Common myeloid progenitor, CD34-positive (primary cell): ENCODE measurements at regions of chr7 and their contacts with region 1.

Region 1: GRCh38 chr7:66894463-66895080 is 26.5 kb upstream of the TMEM248 start:
- DNase-seq: peak; percentile 44 to 69 (median 68)
- H3K4me3 ChIP-seq: no peak overlapping the region
- H3K27ac ChIP-seq: no peak overlapping the region
- H3K4me1 ChIP-seq: no peaks in the 10 kb centered on the region
- H3K27me3 ChIP-seq: no peaks in the 10 kb centered on the region

Region 2: GRCh38 chr7:66824041-66824625 is 70.4 kb before region 1 on chr7:
- CTCF ChIA-PET with region 1: interaction called, 10 read pairs
- POLR2A ChIA-PET with region 1: no interaction called
- DNase-seq: no peak
- H3K4me3 ChIP-seq: no peak overlapping the region
- H3K27ac ChIP-seq: no peak overlapping the region
- H3K4me1 ChIP-seq: no peaks in the 10 kb centered on the region
- H3K27me3 ChIP-seq: no peaks in the 10 kb centered on the region

Region 3: GRCh38 chr7:66844552-66845378 is 49.8 kb before region 1 on chr7:
- CTCF ChIA-PET with region 1: interaction called, 10 read pairs
- POLR2A ChIA-PET with region 1: no interaction called
- DNase-seq: peak; percentile 97 to 99 (median 98)
- H3K4me3 ChIP-seq: peak overlapping the region; percentile 80 to 98 (median 93)
- H3K27ac ChIP-seq: peak overlapping the region; percentile 95 to 99
- H3K4me1 ChIP-seq: peaks cover 8 to 52% (median 37%) of the 10 kb centered on the region in 4 experiments
- H3K27me3 ChIP-seq: no peaks in the 10 kb centered on the region

Region 4: DNA sequence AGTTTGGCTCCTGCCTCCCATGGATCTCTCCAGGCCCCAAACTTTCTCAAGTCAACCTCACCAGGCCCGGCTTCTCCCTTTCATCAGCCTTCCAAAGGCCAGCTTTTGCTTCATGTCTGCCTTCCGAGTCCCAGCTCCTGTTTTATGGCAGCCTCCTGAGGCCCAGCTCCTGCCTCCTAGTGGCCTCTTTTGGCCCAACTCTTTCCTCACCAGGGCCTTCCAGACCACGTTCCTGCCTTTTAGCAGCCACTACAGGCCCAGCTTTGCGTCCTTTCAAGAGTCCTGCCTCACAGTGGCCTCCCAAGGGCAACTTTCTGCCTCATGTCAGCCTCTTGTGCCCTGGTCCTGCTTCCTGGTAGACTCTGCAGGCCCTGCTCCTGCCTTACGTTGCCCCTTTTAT is 11.1 kb after region 1 on chr7:
- CTCF ChIA-PET with region 1: interaction called, 14 read pairs
- POLR2A ChIA-PET with region 1: no interaction called
- DNase-seq: no peak
- H3K4me3 ChIP-seq: no peak overlapping the region
- H3K27ac ChIP-seq: no peak overlapping the region
- H3K4me1 ChIP-seq: peaks cover 0 to 3% (median 0%) of the 10 kb centered on the region in 4 experiments
- H3K27me3 ChIP-seq: no peaks in the 10 kb centered on the region

Region 5: GRCh38 chr7:66930341-66930740 is 35.8 kb after region 1 on chr7:
- CTCF ChIA-PET with region 1: no interaction called
- POLR2A ChIA-PET with region 1: no interaction called
- DNase-seq: peak in 2 of 3 donors; percentile 27 to 29
- H3K4me3 ChIP-seq: no peak overlapping the region
- H3K27ac ChIP-seq: no peak overlapping the region
- H3K4me1 ChIP-seq: no peaks in the 10 kb centered on the region
- H3K27me3 ChIP-seq: no peaks in the 10 kb centered on the region